ENCODE measurements at regions of chr7 and their contacts with region 1.

Region 1: GRCh38 chr7:12686894-12687717 is at the start of gene ARL4A:
- DNase-seq: peak; percentile 96
- H3K4me3 ChIP-seq: peak within 1 kb of the TSS; percentile 88
- H3K27ac ChIP-seq: peak within 1 kb of the TSS; percentile 79
- H3K27me3 ChIP-seq: no peaks in the 10 kb centered on the region
- CTCF ChIP-seq: peak; percentile 29; the same call in 1 of the 2 replicates
- polyA plus RNA-seq, gene ARL4A: 18.3 and 31.0 TPM in 2 replicates

Region 2: DNA sequence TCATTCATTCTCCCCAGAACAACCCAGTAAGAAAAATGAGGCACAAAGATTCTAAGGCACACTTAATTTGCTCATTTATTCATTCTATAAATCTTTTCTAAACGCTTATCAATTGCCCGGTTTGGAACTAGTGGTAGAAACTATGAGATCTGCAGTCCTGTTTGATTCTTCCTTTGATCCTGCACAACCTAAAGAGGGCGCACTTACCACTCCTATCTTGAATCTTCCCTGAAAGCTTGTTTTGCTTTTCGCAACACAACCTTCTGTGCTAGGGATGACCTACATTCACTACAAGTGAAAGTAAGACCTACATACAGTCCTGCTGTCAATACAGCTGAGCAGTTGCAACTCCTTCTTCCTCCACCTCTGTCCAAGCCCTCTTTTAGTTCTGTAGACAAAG is 12.3 kb before region 1 on chr7:
- CTCF ChIA-PET with region 1: interaction called, 49 read pairs
- POLR2A ChIA-PET with region 1: interaction called, 13 read pairs
- DNase-seq: no peak
- H3K4me3 ChIP-seq: no peak overlapping the region
- H3K27ac ChIP-seq: no peak overlapping the region
- H3K27me3 ChIP-seq: no peaks in the 10 kb centered on the region
- CTCF ChIP-seq: peak; percentile 45

Region 3: GRCh38 chr7:12779947-12780346 is 92.8 kb after region 1 on chr7:
- CTCF ChIA-PET with region 1: interaction called, 12 read pairs
- POLR2A ChIA-PET with region 1: no interaction called
- DNase-seq: no peak
- H3K4me3 ChIP-seq: no peak overlapping the region
- H3K27ac ChIP-seq: no peak overlapping the region
- H3K27me3 ChIP-seq: no peaks in the 10 kb centered on the region
- CTCF ChIP-seq: no peak

Region 4: DNA sequence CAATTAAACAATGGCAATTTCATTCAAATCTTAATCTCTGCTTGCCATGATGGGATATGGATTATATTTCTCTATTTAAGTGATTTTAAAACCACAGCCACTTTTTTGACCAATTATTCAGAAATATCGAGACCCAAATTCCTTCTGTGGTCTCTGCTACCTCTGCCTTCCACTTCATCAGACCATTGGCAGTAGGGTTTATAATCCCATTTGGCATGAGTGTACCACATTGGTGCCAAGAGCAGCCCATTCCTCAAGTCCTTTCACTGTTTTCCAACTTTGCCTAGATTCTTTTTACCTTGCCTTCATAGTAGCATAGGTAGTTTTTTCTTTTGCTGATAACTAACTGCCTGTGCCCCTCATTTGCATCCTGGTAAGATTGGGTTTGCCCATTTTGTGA is 320.2 kb after region 1 on chr7:
- CTCF ChIA-PET with region 1: no interaction called
- POLR2A ChIA-PET with region 1: no interaction called
- DNase-seq: no peak
- H3K4me3 ChIP-seq: no peak overlapping the region
- H3K27ac ChIP-seq: no peak overlapping the region
- H3K27me3 ChIP-seq: no peaks in the 10 kb centered on the region
- CTCF ChIP-seq: no peak

Region 5: GRCh38 chr7:13069841-13070240 is 382.7 kb after region 1 on chr7:
- CTCF ChIA-PET with region 1: interaction called, 10 read pairs
- POLR2A ChIA-PET with region 1: no interaction called
- DNase-seq: no peak
- H3K4me3 ChIP-seq: no peak overlapping the region
- H3K27ac ChIP-seq: no peak overlapping the region
- H3K27me3 ChIP-seq: no peaks in the 10 kb centered on the region
- CTCF ChIP-seq: no peak

Region 6: GRCh38 chr7:13144673-13145072 is 457.6 kb after region 1 on chr7:
- CTCF ChIA-PET with region 1: interaction called, 14 read pairs
- POLR2A ChIA-PET with region 1: no interaction called
- DNase-seq: peak; percentile 66
- H3K4me3 ChIP-seq: no peak overlapping the region
- H3K27ac ChIP-seq: no peak overlapping the region
- H3K27me3 ChIP-seq: no peaks in the 10 kb centered on the region
- CTCF ChIP-seq: no peak

Region 7: DNA sequence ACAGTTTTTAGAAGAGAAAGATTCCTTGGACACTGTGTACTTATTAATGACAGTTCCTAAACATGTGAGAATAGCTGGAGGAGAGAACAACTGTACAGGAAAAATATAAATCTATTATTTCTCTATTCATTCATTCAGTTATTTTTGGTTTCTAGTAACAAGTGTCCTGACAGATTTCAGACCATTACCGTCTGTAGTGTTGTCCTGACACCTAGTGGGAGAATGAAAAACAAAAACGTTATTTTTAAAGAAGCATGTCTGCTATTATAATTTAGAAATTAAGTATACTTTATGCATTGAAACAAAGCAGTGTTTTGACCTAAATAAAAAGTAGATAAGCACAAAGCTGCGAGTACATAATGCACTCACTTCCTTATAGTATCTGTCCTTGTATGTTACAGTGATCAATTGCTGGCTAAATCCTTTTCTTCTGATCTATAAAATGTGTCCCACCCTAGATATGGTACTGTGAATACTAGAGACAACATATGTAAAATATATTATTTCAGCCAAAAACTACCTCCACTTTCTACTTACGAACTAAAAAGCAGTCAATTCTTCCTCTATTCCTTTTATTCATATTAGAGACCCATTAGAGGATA is 575.9 kb after region 1 on chr7:
- CTCF ChIA-PET with region 1: interaction called, 104 read pairs
- POLR2A ChIA-PET with region 1: no interaction called
- DNase-seq: peak; percentile 24
- H3K4me3 ChIP-seq: no peak overlapping the region
- H3K27ac ChIP-seq: no peak overlapping the region
- H3K27me3 ChIP-seq: no peaks in the 10 kb centered on the region
- CTCF ChIP-seq: peak; percentile 61